ENCODE measurements at regions of chrX and their contacts with region 1.

Region 1: GRCh38 chrX:120316589-120317283 is 5.5 kb upstream of the TMEM255A start:
- DNase-seq: peak; percentile 35 to 36
- H3K4me3 ChIP-seq: no peak overlapping the region
- H3K4me3 Mint-ChIP-seq: no peak overlapping the region
- H3K27ac Mint-ChIP-seq: no peak overlapping the region
- H3K4me1 ChIP-seq: peaks cover 20% of the 10 kb centered on the region
- H3K4me1 Mint-ChIP-seq: peaks cover 5% of the 10 kb centered on the region
- H3K27me3 ChIP-seq: no peaks in the 10 kb centered on the region
- H3K27me3 Mint-ChIP-seq: no peaks in the 10 kb centered on the region
- CTCF ChIP-seq: no peak

Region 2: GRCh38 chrX:120250522-120251271 is 66.0 kb before region 1 on chrX and contains the start of gene ZBTB33:
- CTCF ChIA-PET with region 1: no interaction called
- POLR2A ChIA-PET with region 1: no interaction called
- intact Hi-C with region 1: loop called (anchors 2 kb)
- DNase-seq: peak; percentile 89 to 91
- H3K4me3 ChIP-seq: peak within 1 kb of the TSS; percentile 71
- H3K4me3 Mint-ChIP-seq: peak within 1 kb of the TSS; percentile 97
- H3K27ac Mint-ChIP-seq: peak within 1 kb of the TSS; percentile 99
- H3K4me1 ChIP-seq: no peaks in the 10 kb centered on the region
- H3K4me1 Mint-ChIP-seq: no peaks in the 10 kb centered on the region
- H3K27me3 ChIP-seq: no peaks in the 10 kb centered on the region
- H3K27me3 Mint-ChIP-seq: no peaks in the 10 kb centered on the region
- CTCF ChIP-seq: peak in 1 of 2 experiments; percentile 74
- total RNA-seq, gene ZBTB33: 16.5 and 17.2 TPM in 2 replicates

Region 3: DNA sequence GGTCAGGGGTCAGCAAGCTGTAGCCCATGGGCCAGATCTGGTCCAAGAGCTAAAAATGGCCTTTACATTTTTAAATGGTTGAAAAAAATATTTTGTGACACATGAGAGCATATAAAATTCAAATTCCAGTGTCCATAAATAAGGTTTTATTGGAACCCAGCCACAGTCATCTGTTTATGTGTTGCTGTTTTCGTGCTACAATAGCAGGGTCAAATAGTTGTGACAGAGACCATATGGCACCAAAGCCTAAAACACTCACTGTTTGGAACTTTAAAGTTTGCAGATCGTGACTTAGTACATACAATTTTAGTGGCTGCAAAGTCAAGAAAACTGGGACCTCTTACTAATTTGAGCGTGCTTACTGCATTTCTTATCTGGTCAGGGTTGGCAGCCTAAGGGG is 123.2 kb after region 1 on chrX:
- CTCF ChIA-PET with region 1: no interaction called
- POLR2A ChIA-PET with region 1: no interaction called
- intact Hi-C with region 1: no loop called
- DNase-seq: no peak
- H3K4me3 ChIP-seq: no peak overlapping the region
- H3K4me3 Mint-ChIP-seq: no peak overlapping the region
- H3K27ac Mint-ChIP-seq: no peak overlapping the region
- H3K4me1 ChIP-seq: no peaks in the 10 kb centered on the region
- H3K4me1 Mint-ChIP-seq: no peaks in the 10 kb centered on the region
- H3K27me3 ChIP-seq: no peaks in the 10 kb centered on the region
- H3K27me3 Mint-ChIP-seq: no peaks in the 10 kb centered on the region
- CTCF ChIP-seq: no peak

Region 4: GRCh38 chrX:120452131-120452530 is 135.4 kb after region 1 on chrX:
- CTCF ChIA-PET with region 1: interaction called, 3 read pairs
- POLR2A ChIA-PET with region 1: no interaction called
- intact Hi-C with region 1: loop called (anchors 5 kb)
- DNase-seq: peak in 1 of 2 experiments; percentile 6
- H3K4me3 ChIP-seq: no peak overlapping the region
- H3K4me3 Mint-ChIP-seq: no peak overlapping the region
- H3K27ac Mint-ChIP-seq: no peak overlapping the region
- H3K4me1 ChIP-seq: no peaks in the 10 kb centered on the region
- H3K4me1 Mint-ChIP-seq: no peaks in the 10 kb centered on the region
- H3K27me3 ChIP-seq: no peaks in the 10 kb centered on the region
- H3K27me3 Mint-ChIP-seq: no peaks in the 10 kb centered on the region
- CTCF ChIP-seq: peak in 1 of 2 experiments; percentile 37

Measured in Caco-2 (cell line).